ENCODE measurements at regions of chr9 and their contacts with region 1.

Region 1: GRCh38 chr9:69672596-69673310 is 582 bp upstream of the APBA1 start:
- DNase-seq: peak; percentile 72
- H3K4me3 ChIP-seq: peak overlapping the region; percentile 82
- H3K27ac ChIP-seq: no peak overlapping the region
- H3K27me3 ChIP-seq: no peaks in the 10 kb centered on the region
- CTCF ChIP-seq: peak; percentile 94

Region 2: DNA sequence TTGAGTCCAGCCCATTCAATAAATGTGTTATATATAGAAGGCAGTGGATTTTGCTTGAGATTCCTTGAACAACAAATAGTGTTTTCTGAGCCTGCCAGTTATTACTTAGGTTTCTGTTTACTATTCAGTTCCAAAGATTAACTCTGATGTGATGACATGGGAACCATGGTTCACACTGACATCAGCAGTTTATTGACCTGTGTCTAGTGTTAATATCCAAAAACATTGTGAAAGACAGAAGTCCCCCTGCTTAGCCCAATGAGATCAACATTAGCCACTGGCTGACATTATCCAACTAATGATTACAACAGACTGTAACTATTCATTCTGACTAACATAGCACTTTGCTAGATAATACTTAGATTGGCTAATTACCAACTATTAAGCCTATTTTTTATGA is 15.5 kb before region 1 on chr9:
- CTCF ChIA-PET with region 1: interaction called, 18 read pairs
- POLR2A ChIA-PET with region 1: interaction called, 4 read pairs
- DNase-seq: no peak
- H3K4me3 ChIP-seq: no peak overlapping the region
- H3K27ac ChIP-seq: no peak overlapping the region
- H3K27me3 ChIP-seq: no peaks in the 10 kb centered on the region
- CTCF ChIP-seq: no peak

Region 3: GRCh38 chr9:69745716-69746437 is 73.1 kb after region 1 on chr9:
- CTCF ChIA-PET with region 1: interaction called, 26 read pairs
- POLR2A ChIA-PET with region 1: no interaction called
- DNase-seq: no peak
- H3K4me3 ChIP-seq: no peak overlapping the region
- H3K27ac ChIP-seq: no peak overlapping the region
- H3K27me3 ChIP-seq: no peaks in the 10 kb centered on the region
- CTCF ChIP-seq: peak; percentile 45

Region 4: DNA sequence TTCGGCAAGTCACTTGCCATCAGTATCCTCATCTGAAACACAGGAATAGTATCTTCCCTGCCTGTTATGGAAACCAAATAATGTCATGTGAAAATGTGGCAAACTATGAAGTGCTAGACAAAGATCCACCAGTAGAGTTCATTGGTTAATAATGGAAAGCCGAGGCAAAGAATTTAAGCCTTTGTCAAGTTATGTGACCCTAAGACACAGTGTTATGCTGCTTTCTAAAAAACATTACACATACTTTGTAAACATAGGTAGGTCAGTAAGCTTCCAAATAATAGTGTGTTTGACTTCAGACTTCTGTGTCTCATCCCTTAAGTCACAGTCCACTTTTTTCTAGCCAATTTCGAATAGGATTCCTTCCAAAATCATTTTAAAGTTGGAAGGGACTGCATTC is 81.1 kb after region 1 on chr9:
- CTCF ChIA-PET with region 1: interaction called, 26 read pairs
- POLR2A ChIA-PET with region 1: no interaction called
- DNase-seq: no peak
- H3K4me3 ChIP-seq: no peak overlapping the region
- H3K27ac ChIP-seq: no peak overlapping the region
- H3K27me3 ChIP-seq: no peaks in the 10 kb centered on the region
- CTCF ChIP-seq: no peak

Region 5: GRCh38 chr9:69759421-69760277 is 86.9 kb after region 1 on chr9 and contains the start of gene PTAR1:
- CTCF ChIA-PET with region 1: interaction called, 7 read pairs
- POLR2A ChIA-PET with region 1: interaction called, 13 read pairs
- DNase-seq: peak; percentile 67
- H3K4me3 ChIP-seq: peak within 1 kb of the TSS; percentile 82
- H3K27ac ChIP-seq: peak within 1 kb of the TSS; percentile 88
- H3K27me3 ChIP-seq: no peaks in the 10 kb centered on the region
- CTCF ChIP-seq: no peak
- polyA plus RNA-seq, gene PTAR1: 20.2 and 23.9 TPM in 2 replicates

Region 6: DNA sequence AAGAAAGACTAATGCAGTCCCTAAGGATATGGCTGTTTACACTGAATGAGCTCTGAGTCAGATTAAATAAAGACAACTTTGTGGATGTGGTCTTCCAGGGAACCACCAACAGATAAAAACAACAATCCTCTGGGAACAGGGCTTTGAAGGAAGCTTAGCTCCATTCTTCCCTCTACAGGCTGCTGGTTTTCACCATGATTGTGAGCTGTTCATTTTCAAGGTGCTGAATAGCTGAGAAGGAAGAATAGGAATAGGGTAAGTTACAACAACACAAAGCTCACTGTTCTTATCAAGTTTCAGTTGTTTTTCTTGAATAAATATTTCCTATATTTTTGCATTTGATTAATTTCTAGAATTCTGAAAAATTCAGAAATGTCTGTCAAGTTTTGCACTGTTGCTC is 113.0 kb after region 1 on chr9:
- CTCF ChIA-PET with region 1: interaction called, 13 read pairs
- POLR2A ChIA-PET with region 1: no interaction called
- DNase-seq: peak; percentile 52
- H3K4me3 ChIP-seq: no peak overlapping the region
- H3K27ac ChIP-seq: no peak overlapping the region
- H3K27me3 ChIP-seq: no peaks in the 10 kb centered on the region
- CTCF ChIP-seq: peak; percentile 72

Region 7: DNA sequence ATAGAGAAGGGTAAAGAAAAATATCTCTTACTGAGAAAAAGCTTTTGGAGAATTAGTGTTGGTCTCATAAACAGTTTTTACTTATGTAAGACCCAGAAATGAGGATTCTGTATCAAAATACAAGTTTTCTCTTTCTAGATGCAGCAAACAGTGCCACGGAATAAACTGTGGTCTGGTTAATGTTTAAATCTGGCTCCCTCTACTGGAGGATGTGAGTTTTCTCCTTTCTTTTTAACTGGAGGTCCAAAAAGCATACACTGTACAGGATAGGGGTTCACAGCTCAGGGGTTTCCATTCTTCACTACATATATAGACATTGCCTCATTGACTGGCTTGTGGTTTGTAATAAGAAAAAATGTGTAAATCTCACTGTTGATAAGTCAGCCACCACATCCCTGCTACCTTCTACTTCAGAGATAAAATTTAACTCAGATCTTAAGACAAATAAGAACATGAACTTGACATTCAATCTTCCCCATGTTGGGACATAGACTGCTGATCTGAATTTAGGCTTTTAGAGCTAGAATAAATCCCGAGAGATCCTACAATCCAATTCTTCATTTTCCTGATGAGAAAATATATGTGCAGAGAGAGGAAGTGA is 246.8 kb after region 1 on chr9:
- CTCF ChIA-PET with region 1: interaction called, 18 read pairs
- POLR2A ChIA-PET with region 1: no interaction called
- DNase-seq: peak; percentile 24
- H3K4me3 ChIP-seq: no peak overlapping the region
- H3K27ac ChIP-seq: no peak overlapping the region
- H3K27me3 ChIP-seq: no peaks in the 10 kb centered on the region
- CTCF ChIP-seq: peak; percentile 75